Common myeloid progenitor, CD34-positive (primary cell): ENCODE measurements at regions of chr12 and their contacts with region 1.

Region 1: DNA sequence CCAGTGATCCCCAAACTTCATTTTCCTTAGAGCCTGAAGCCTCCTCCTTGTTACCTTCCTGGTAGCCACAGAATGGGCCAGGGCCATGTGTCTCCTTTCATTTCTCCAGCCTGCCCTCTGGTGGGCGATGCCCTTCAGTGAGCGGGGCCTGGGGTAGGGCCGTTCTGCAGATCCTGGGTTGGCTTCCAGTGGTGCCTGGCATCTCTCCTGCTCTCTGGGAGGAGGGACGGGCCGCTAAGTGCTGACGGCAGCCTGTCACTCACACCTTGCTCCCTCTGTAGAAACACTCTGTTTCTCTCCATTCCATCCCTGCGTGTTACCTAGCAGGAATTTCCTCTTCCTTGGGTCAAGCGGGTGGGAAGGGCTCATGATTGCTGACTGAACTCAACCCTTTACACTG is 232.1 kb downstream of the CACNA1C start:
- DNase-seq: peak; percentile 56 to 77 (median 76)
- H3K4me3 ChIP-seq: no peak overlapping the region
- H3K27ac ChIP-seq: no peak overlapping the region
- H3K4me1 ChIP-seq: peaks cover 5 to 73% (median 53%) of the 10 kb centered on the region in 4 experiments
- H3K27me3 ChIP-seq: no peaks in the 10 kb centered on the region

Region 2: DNA sequence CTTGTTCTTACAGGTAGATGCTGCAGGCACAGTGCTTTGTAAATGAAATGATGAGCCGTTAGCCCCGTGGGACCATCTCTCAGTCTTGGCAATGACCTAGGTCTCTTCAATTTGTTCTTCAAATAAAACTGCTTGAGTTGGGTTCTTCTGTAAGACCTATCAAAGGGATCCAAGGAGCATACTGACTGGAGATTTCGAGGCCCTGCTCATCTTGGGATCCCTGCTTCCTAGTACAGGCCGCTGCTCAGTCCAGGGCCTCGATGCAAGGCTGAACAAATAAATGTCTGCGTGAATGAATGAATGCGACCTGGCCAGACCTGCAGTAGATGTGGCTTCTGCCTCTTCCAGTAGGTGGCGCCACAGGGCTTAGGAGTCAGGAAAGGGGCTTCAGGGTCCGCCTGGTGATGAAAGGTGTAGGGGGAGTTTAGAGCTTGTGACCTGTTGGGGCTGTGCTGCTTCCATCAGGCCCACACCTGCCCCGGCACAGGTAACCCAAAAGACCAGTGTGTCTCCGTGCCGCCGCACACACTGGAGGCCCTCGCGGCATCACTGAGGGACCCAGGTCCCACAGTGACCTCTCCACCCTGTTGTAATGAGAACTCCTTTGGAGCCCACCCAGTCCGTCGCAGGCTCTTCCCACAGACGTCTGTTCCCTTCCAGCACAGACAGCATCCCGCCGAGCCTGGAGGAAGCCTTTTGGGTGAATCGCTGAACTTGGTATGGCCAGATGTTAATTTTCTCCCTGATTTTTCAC is 227.6 kb before region 1 on chr12:
- CTCF ChIA-PET with region 1: interaction called, 35 read pairs
- POLR2A ChIA-PET with region 1: no interaction called
- DNase-seq: peak; percentile 81 to 90 (median 86)
- H3K4me3 ChIP-seq: no peak overlapping the region
- H3K27ac ChIP-seq: no peak overlapping the region
- H3K4me1 ChIP-seq: peaks cover 0 to 16% (median 14%) of the 10 kb centered on the region in 4 experiments
- H3K27me3 ChIP-seq: peaks cover 13 to 35% (median 23%) of the 10 kb centered on the region in 5 experiments

Region 3: GRCh38 chr12:2101771-2102170 is 183.1 kb before region 1 on chr12:
- CTCF ChIA-PET with region 1: no interaction called
- POLR2A ChIA-PET with region 1: no interaction called
- DNase-seq: no peak
- H3K4me3 ChIP-seq: no peak overlapping the region
- H3K27ac ChIP-seq: no peak overlapping the region
- H3K4me1 ChIP-seq: no peaks in the 10 kb centered on the region
- H3K27me3 ChIP-seq: no peaks in the 10 kb centered on the region

Region 4: GRCh38 chr12:2273288-2273687 is 11.6 kb before region 1 on chr12:
- CTCF ChIA-PET with region 1: interaction called, 20 read pairs
- POLR2A ChIA-PET with region 1: interaction called, 3 read pairs
- DNase-seq: no peak
- H3K4me3 ChIP-seq: no peak overlapping the region
- H3K27ac ChIP-seq: no peak overlapping the region
- H3K4me1 ChIP-seq: no peaks in the 10 kb centered on the region
- H3K27me3 ChIP-seq: no peaks in the 10 kb centered on the region

Region 5: DNA sequence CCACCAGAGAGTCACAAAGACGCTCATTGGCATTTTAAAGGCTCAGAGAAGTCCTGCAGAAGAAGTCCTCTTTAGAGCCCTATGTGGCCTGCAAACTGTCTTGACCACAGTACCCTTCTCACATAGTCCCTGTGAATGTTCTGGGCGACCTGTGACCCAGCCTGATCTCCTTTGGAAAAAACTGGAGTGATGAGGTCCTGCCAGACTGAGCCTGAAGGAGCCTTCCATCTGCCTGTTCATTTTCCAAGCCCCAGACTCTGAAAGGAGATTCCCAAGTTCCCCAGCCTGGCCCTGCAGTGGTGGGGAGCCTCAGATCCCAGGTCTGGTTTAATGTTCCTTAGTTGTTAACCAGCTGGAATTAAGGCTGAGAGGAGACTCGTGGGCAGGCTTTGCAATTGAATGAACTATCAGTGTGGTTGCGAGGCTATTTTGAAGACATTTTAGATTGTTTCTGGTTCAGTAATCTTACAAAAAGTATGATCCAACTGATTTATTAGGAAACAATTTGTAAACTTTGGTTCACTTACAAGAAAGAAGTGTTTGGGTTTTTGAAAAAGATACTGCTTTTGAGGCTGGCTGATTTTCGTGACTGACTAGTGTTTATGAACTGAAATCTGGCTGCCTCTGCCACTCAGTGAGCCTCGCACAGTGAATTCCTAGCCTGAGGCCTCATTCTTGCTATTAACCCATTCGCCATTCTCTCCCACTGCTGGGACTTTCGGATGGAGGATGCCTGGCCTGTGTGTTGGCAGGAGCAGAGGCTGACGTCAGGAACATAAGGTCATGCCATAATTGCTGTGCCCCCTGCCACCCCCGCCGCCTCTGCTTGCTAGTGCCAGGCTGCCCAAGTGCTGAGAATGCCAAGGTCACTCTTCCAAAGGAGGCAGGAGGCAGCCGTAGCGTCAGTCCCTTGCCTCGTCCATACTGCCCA is 16.9 kb after region 1 on chr12:
- CTCF ChIA-PET with region 1: interaction called, 25 read pairs
- POLR2A ChIA-PET with region 1: interaction called, 3 read pairs
- DNase-seq: no peak
- H3K4me3 ChIP-seq: no peak overlapping the region
- H3K27ac ChIP-seq: no peak overlapping the region
- H3K4me1 ChIP-seq: peaks cover 3 to 63% (median 39%) of the 10 kb centered on the region in 4 experiments
- H3K27me3 ChIP-seq: no peaks in the 10 kb centered on the region

Region 6: DNA sequence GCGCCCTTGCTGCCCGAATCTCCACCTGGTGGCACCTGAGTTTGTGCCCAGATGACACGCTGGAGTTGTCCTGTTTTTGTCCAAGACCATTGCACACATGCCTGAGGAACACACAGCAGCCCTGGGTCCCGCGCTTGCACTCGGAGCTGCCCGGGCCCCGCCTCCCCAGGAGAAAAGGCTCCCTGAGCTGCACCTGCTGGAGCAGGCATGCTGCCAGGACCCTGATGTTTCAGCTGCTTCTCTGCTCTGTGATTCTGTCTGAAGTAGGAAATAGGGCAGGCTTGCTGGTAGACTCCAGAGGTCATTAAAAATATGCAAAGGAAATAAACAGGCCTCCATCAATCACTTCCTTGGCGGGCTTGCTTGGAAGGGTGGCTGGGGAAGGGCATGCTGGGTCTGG is 39.5 kb after region 1 on chr12:
- CTCF ChIA-PET with region 1: interaction called, 12 read pairs
- POLR2A ChIA-PET with region 1: no interaction called
- DNase-seq: peak; percentile 66 to 90 (median 90)
- H3K4me3 ChIP-seq: peak overlapping the region in 1 of 7 experiments; percentile 5
- H3K27ac ChIP-seq: no peak overlapping the region
- H3K4me1 ChIP-seq: peaks cover 4 to 40% (median 37%) of the 10 kb centered on the region in 4 experiments
- H3K27me3 ChIP-seq: no peaks in the 10 kb centered on the region